Endothelial cell of umbilical vein (primary cell): ENCODE measurements at regions of chr12 and their contacts with region 1.

Region 1: DNA sequence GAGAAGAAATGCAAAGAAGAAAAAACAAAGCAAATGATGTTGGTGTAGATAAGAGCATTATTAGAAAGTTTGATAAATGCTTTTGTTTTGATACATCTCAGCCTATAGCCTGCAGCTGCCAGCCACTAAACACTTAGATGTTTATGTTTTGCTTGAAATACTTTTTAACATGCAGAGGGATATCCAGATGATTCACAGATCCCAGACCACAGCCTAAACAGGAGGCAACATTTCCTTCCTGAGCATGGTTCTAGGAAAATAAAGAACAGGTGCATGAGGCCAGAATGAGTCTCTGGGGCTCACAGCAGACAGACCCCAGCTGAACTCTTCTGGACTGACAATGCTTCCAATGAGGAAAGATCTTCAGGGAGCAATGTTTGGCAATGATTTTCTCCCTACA is 103.7 kb upstream of the EEA1 start:
- DNase-seq: peak; percentile 98
- H3K4me3 ChIP-seq: no peak overlapping the region
- H3K27ac ChIP-seq: peak overlapping the region; percentile 82
- H3K4me1 ChIP-seq: peaks cover 19% of the 10 kb centered on the region
- H3K27me3 ChIP-seq: no peaks in the 10 kb centered on the region
- CTCF ChIP-seq: no peak
- POLR2A ChIP-seq: peak; percentile 60

Region 2: DNA sequence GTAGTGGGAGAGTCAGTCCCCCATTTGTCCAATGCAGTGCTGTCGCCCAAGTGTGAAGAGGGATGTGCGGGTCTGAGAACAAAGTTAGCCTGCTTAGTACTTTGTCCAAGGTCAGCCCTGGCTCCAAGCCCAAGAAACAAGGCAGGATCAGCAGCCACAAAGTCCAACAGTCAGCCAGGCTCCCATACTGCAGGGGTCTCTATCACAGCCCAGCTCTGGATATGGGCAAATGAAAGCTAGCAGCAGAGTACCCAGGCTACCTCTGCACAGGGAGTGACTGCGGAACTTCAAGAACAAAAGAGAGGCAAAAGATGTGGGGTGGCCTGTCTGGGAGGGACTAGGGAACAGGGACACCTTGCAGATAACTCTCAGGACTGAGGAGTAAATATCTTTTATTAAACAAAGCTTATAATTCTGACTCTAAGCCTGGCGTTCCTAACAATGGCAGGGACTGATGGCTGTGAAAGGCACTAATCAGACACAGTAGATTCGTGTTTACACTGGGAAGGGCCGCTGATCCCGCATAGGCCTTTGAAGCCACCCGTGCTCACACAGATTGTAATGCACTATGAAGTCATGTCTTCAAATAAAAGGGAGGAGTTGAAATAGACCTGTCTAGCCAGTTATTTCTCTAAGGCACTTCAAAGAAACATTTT is 12.7 kb before region 1 on chr12:
- CTCF ChIA-PET with region 1: interaction called, 3 read pairs
- POLR2A ChIA-PET with region 1: interaction called, 3 read pairs
- dilution Hi-C with region 1: no loop called
- intact Hi-C with region 1: loop called (anchors 1 kb)
- DNase-seq: peak; percentile 62
- H3K4me3 ChIP-seq: no peak overlapping the region
- H3K27ac ChIP-seq: peak overlapping the region; percentile 46
- H3K4me1 ChIP-seq: peaks cover 39% of the 10 kb centered on the region
- H3K27me3 ChIP-seq: no peaks in the 10 kb centered on the region
- CTCF ChIP-seq: no peak
- POLR2A ChIP-seq: no peak

Region 3: DNA sequence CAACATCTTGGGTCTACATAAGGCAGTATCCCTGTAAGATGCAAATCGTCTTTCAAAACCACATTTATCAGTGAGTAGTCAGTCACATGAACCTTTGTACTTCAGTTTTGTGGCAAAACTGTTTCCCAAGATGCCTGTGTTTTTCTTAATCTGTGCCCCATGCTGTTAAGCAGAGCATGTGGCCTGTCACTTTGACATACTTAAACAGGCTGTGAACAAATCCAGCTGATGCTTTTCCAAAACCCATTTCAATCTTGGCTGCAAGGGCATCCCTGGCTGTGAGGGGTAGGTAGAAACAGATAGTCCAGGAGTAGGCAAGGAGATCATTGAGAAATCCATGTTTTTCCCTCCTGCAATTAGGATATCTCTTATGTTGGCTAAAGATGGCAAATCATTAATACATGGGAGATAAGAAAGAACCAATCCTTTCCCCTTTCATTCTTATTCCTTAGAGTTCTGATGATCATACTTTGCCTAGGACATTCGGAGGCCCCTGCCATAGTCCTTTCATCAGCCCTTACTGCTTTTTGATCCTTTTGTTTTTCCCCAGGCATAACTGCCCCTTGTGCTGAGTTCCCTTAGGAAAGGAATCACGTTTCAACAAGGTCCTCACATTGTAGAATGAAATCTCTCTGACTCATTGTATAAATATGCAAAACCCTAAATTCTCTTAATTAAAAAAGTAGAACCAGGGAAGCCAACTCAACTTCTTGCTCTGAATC is 17.4 kb after region 1 on chr12:
- CTCF ChIA-PET with region 1: no interaction called
- POLR2A ChIA-PET with region 1: no interaction called
- dilution Hi-C with region 1: no loop called
- intact Hi-C with region 1: no loop called
- DNase-seq: peak; percentile 63
- H3K4me3 ChIP-seq: no peak overlapping the region
- H3K27ac ChIP-seq: peak overlapping the region; percentile 29
- H3K4me1 ChIP-seq: peaks cover 22% of the 10 kb centered on the region
- H3K27me3 ChIP-seq: no peaks in the 10 kb centered on the region
- CTCF ChIP-seq: no peak
- POLR2A ChIP-seq: no peak

Region 4: GRCh38 chr12:93080994-93081797 is 48.4 kb after region 1 on chr12:
- CTCF ChIA-PET with region 1: no interaction called
- POLR2A ChIA-PET with region 1: no interaction called
- dilution Hi-C with region 1: no loop called
- intact Hi-C with region 1: loop called (anchors 2 kb)
- DNase-seq: peak; percentile 64
- H3K4me3 ChIP-seq: no peak overlapping the region
- H3K27ac ChIP-seq: peak overlapping the region; percentile 30
- H3K4me1 ChIP-seq: peaks cover 19% of the 10 kb centered on the region
- H3K27me3 ChIP-seq: no peaks in the 10 kb centered on the region
- CTCF ChIP-seq: no peak
- POLR2A ChIP-seq: no peak

Region 5: DNA sequence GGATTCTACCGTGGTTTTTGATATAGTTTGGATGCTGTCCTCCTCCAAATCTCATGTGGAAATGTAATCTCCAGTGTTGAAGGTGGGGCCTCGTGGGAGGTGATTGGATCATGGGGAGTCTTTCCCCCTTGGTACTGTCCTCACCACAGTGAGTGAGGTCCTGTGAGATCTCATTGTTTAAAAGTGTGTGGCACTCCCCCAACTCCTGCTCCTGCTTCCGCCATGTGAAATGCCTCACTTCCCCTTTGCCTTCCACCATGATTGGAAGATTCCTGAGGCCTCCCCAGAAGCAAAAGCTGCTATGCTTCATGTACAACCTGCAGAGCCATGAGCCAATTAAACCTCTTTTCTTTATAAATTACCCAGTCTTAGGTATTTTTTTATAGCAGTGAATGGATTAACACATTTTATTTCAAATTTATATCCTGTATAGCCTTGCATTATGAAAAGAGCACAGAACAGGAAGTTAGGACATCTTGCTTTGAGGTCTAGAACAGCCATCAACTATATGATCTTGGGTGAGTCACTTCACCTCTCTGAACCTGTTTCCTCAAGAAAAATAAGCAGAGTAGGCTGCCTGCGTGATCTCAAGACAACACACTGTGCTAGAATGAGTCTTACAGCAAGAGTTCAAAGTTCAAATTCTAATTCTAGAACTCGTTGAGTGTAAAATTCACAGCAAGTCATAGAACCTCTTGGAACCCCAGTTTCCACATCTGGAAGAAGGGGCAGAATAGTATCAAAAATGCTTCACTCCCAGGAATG is 57.2 kb after region 1 on chr12:
- CTCF ChIA-PET with region 1: no interaction called
- POLR2A ChIA-PET with region 1: no interaction called
- dilution Hi-C with region 1: no loop called
- intact Hi-C with region 1: loop called (anchors 1 kb)
- DNase-seq: peak; percentile 92
- H3K4me3 ChIP-seq: no peak overlapping the region
- H3K27ac ChIP-seq: peak overlapping the region; percentile 83
- H3K4me1 ChIP-seq: peaks cover 41% of the 10 kb centered on the region
- H3K27me3 ChIP-seq: no peaks in the 10 kb centered on the region
- CTCF ChIP-seq: no peak
- POLR2A ChIP-seq: no peak

Region 6: GRCh38 chr12:93109551-93110203 is 76.9 kb after region 1 on chr12:
- CTCF ChIA-PET with region 1: no interaction called
- POLR2A ChIA-PET with region 1: no interaction called
- dilution Hi-C with region 1: no loop called
- intact Hi-C with region 1: loop called (anchors 1 kb)
- DNase-seq: no peak
- H3K4me3 ChIP-seq: no peak overlapping the region
- H3K27ac ChIP-seq: no peak overlapping the region
- H3K4me1 ChIP-seq: peaks cover 31% of the 10 kb centered on the region
- H3K27me3 ChIP-seq: no peaks in the 10 kb centered on the region
- CTCF ChIP-seq: no peak
- POLR2A ChIP-seq: no peak